ENCODE measurements at regions of chr4 and their contacts with region 1.

Region 1: DNA sequence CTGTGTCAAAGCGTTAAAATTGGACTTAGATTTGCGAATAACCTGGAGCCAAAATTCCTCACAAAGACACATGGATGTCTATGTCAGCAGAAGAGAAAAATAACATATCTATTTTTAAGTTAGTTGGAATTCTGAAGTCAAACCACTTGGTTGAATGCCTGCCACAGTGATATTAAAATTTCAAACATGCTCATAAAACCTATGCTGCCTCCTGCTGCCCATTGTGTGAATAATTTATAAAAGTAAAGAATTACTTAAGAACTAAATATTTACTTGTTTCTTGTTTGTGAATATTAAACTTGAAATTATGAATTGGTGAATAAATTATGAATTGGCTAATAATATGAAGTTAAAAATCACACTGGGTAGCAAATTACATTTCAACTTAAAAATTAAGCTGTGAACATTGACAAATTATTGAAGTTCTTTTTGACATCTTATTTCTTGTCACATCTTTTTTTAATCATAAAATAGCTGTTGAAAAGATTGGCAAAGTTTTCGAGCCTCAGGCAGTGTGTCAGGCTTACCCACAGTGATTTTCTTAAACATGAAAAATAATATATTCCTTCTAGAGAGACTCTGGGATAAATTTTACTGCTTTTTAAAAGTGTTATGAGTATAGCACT is 35.4 kb downstream of the FABP2 start:
- DNase-seq: peak in 1 of 2 donors; percentile 13
- H3K4me3 ChIP-seq: no peak overlapping the region
- H3K27ac ChIP-seq: no peak overlapping the region
- H3K4me1 ChIP-seq: peaks cover 13% of the 10 kb centered on the region in 2 donors
- H3K27me3 ChIP-seq: no peaks in the 10 kb centered on the region
- CTCF ChIP-seq: peak in 5 of 6 experiments; percentile 25 to 66 (median 62)
- POLR2A ChIP-seq: no peak

Region 2: GRCh38 chr4:119041951-119042560 is 244.4 kb before region 1 on chr4:
- intact Hi-C with region 1: loop called (anchors 5 kb)
- DNase-seq: peak; percentile 23 to 57
- H3K4me3 ChIP-seq: no peak overlapping the region
- H3K27ac ChIP-seq: peak overlapping the region in 1 of 3 donors; percentile 2
- H3K4me1 ChIP-seq: peaks cover 0 to 13% of the 10 kb centered on the region in 2 donors
- H3K27me3 ChIP-seq: no peaks in the 10 kb centered on the region
- CTCF ChIP-seq: peak; percentile 27 to 75 (median 60)
- POLR2A ChIP-seq: no peak

Region 3: GRCh38 chr4:119212234-119212963 is 74.1 kb before region 1 on chr4 and contains the start of gene USP53:
- intact Hi-C with region 1: loop called (anchors 10 kb)
- DNase-seq: peak; percentile 98 to 99
- H3K4me3 ChIP-seq: peak within 1 kb of the TSS; percentile 36 to 92 (median 75)
- H3K27ac ChIP-seq: peak within 1 kb of the TSS; percentile 95 to 97 (median 96)
- H3K4me1 ChIP-seq: peaks cover 0 to 4% of the 10 kb centered on the region in 2 donors
- H3K27me3 ChIP-seq: no peaks in the 10 kb centered on the region
- CTCF ChIP-seq: peak in 3 of 6 experiments; percentile 13 to 30 (median 18)
- POLR2A ChIP-seq: peak; percentile 89 to 99
- total RNA-seq, gene USP53: 42.5 to 113 (median 68.3) TPM

Region 4: GRCh38 chr4:119471259-119471658 is 184.8 kb after region 1 on chr4:
- intact Hi-C with region 1: no loop called
- DNase-seq: no peak
- H3K4me3 ChIP-seq: no peak overlapping the region
- H3K27ac ChIP-seq: no peak overlapping the region
- H3K4me1 ChIP-seq: no peaks in the 10 kb centered on the region
- H3K27me3 ChIP-seq: no peaks in the 10 kb centered on the region
- CTCF ChIP-seq: no peak
- POLR2A ChIP-seq: no peak

Measured in thyroid gland (tissue), 4 donors.